Activated CD4-positive, alpha-beta memory T cell treated with anti-CD3 and anti-CD28 coated beads for 36 hours (primary cell): ENCODE measurements at regions of chr1 and their contacts with region 1.

Region 1: DNA sequence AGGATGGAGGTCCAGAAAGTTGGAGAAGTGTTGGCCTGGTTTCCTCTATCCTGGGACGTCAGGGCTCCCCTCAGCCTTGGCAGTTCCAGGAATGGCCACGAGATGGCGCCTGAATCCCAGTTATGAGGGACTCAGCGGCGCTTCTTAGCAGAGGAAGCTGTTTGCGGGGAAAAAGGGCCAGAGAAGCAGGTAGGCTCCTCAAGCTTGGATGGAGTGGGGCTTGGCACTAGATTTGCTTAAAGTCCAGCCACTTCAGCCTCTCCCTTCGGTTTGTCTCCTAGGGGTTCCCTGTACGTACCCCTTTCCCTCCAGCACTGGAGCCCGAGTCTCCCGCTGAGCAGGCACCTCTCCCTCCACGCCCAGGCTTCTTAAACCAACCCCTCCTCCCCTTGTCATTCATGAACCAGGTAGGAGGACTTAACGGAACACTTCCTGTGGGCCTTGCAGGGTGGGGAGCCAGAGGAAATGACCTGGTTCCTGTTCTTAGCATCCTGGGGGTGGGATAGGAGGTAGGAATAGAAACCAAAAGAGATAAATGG is 32.0 kb upstream of the TENT5B start:
- DNase-seq: peak; percentile 93
- H3K4me3 Mint-ChIP-seq: peak overlapping the region; percentile 64
- H3K27ac Mint-ChIP-seq: peak overlapping the region; percentile 42
- H3K4me1 Mint-ChIP-seq: peaks cover 19% of the 10 kb centered on the region
- H3K27me3 Mint-ChIP-seq: no peaks in the 10 kb centered on the region

Region 2: GRCh38 chr1:26889551-26890466 is 154.9 kb before region 1 on chr1 and contains the start of gene GPN2:
- CTCF ChIA-PET with region 1: no interaction called
- POLR2A ChIA-PET with region 1: no interaction called
- intact Hi-C with region 1: no loop called
- DNase-seq: peak; percentile 86
- H3K4me3 Mint-ChIP-seq: peak within 1 kb of the TSS; percentile 90
- H3K27ac Mint-ChIP-seq: peak within 1 kb of the TSS; percentile 85
- H3K4me1 Mint-ChIP-seq: peaks cover 36% of the 10 kb centered on the region
- H3K27me3 Mint-ChIP-seq: no peaks in the 10 kb centered on the region
- total RNA-seq, gene GPN2: 35.4 to 38.3 TPM

Region 3: GRCh38 chr1:26993237-26994019 is 51.3 kb before region 1 on chr1 and contains the start of gene TRNP1:
- CTCF ChIA-PET with region 1: interaction called, 18 read pairs
- POLR2A ChIA-PET with region 1: interaction called, 4 read pairs
- intact Hi-C with region 1: loop called (anchors 10 kb)
- DNase-seq: peak; percentile 75
- H3K4me3 Mint-ChIP-seq: peak within 1 kb of the TSS; percentile 68
- H3K27ac Mint-ChIP-seq: no peak within 1 kb of the TSS
- H3K4me1 Mint-ChIP-seq: peaks cover 20% of the 10 kb centered on the region
- H3K27me3 Mint-ChIP-seq: peaks cover 44% of the 10 kb centered on the region
- total RNA-seq, gene TRNP1: 0.19 to 0.53 TPM

Region 4: DNA sequence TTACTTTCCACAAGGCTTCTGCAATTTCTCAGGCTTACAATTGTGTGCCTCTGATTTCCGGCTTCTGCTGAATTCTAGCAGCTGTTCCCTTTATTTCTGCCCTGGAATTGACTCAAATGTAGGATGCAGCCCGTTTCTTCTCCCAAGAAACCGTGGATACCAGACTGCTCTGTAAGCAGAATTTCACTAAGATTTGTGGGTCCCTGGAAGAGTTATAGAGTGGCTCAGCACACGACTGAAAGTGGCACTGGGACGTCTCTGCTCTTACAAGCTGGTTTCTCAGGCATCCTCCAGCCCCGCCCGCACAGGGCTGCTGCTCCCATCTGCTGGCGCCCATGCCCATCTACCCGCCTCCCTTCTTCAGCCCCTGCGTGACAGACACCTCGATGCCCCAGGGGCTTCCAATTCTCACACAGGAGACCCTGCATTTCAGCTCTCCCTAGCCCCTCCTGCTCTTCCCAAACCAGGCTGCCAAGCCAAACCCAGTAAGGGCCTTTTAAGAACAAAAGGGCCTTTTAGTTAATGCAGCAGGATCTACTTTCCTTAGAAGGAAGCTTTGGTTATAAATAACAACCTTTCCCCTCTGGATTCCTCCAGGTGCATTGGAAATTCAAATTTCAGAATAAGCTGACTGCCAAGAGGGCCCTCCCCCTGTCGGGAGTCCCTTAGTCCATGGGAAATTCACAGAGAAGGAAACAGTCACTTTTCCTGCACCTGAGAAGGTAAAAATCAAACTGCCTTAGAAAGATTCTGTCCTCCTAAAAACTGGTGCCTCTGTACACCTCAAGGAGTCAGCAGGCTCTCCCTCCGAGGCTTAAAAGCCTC is 13.3 kb after region 1 on chr1:
- CTCF ChIA-PET with region 1: interaction called, 74 read pairs
- POLR2A ChIA-PET with region 1: no interaction called
- intact Hi-C with region 1: no loop called
- DNase-seq: no peak
- H3K4me3 Mint-ChIP-seq: no peak overlapping the region
- H3K27ac Mint-ChIP-seq: no peak overlapping the region
- H3K4me1 Mint-ChIP-seq: no peaks in the 10 kb centered on the region
- H3K27me3 Mint-ChIP-seq: no peaks in the 10 kb centered on the region

Region 5: GRCh38 chr1:27087371-27088220 is 42.9 kb after region 1 on chr1:
- CTCF ChIA-PET with region 1: interaction called, 366 read pairs
- POLR2A ChIA-PET with region 1: no interaction called
- intact Hi-C with region 1: no loop called
- DNase-seq: no peak
- H3K4me3 Mint-ChIP-seq: no peak overlapping the region
- H3K27ac Mint-ChIP-seq: no peak overlapping the region
- H3K4me1 Mint-ChIP-seq: no peaks in the 10 kb centered on the region
- H3K27me3 Mint-ChIP-seq: peaks cover 3% of the 10 kb centered on the region

Region 6: DNA sequence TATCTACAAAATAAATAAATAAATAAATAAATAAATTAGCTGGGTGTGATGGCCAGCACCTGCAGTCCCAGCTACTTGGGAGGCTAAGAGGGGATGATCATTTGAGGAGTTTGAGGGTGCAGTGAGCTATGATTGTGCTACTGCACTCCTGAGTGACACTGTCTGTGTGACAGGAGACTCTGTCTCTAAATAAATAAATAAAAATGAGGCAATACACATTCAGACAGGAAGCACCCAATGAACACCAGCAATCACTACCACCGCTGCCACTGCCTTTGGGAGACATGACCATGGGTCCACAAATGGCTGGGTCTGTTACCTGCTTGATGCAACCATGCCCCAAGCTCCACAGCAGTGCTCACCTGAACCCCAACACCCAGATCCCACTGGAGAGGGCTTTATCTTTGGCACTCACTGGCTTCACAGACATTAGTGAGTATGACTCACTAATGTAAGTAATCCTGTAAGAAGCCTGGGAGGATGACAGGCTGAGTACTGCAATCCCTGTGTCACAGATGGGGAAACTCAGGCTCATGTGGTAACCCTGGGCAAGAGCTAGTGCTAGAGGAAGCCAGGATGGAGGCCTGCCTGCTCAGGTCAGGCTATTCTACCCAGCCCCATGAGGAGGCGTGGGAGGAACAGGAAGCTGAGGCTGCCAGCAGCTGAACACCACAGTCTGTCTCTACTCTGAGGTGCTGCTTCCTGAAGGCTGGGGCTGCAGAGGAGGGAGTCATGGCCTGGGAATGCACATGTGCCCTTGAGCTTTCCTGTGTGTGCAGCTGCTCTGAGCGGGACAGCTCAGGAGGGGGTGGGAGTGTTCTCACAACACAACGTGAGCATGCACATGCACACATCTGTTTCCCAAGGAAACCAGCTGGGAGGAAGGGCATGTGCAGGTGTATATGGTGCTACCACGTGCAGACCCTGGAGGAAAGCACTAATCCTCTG is 67.2 kb after region 1 on chr1:
- CTCF ChIA-PET with region 1: interaction called, 17 read pairs
- POLR2A ChIA-PET with region 1: no interaction called
- intact Hi-C with region 1: no loop called
- DNase-seq: peak; percentile 89
- H3K4me3 Mint-ChIP-seq: no peak overlapping the region
- H3K27ac Mint-ChIP-seq: peak overlapping the region; percentile 83
- H3K4me1 Mint-ChIP-seq: peaks cover 40% of the 10 kb centered on the region
- H3K27me3 Mint-ChIP-seq: no peaks in the 10 kb centered on the region

Region 7: GRCh38 chr1:27201295-27201694 is 156.6 kb after region 1 on chr1:
- CTCF ChIA-PET with region 1: interaction called, 13 read pairs
- POLR2A ChIA-PET with region 1: no interaction called
- intact Hi-C with region 1: loop called (anchors 1 kb)
- DNase-seq: no peak
- H3K4me3 Mint-ChIP-seq: no peak overlapping the region
- H3K27ac Mint-ChIP-seq: no peak overlapping the region
- H3K4me1 Mint-ChIP-seq: peaks cover 4% of the 10 kb centered on the region
- H3K27me3 Mint-ChIP-seq: no peaks in the 10 kb centered on the region

Region 8: GRCh38 chr1:27300341-27301051 is 255.8 kb after region 1 on chr1:
- CTCF ChIA-PET with region 1: interaction called, 23 read pairs
- POLR2A ChIA-PET with region 1: no interaction called
- intact Hi-C with region 1: no loop called
- DNase-seq: peak; percentile 83
- H3K4me3 Mint-ChIP-seq: no peak overlapping the region
- H3K27ac Mint-ChIP-seq: no peak overlapping the region
- H3K4me1 Mint-ChIP-seq: no peaks in the 10 kb centered on the region
- H3K27me3 Mint-ChIP-seq: no peaks in the 10 kb centered on the region

Region 9: DNA sequence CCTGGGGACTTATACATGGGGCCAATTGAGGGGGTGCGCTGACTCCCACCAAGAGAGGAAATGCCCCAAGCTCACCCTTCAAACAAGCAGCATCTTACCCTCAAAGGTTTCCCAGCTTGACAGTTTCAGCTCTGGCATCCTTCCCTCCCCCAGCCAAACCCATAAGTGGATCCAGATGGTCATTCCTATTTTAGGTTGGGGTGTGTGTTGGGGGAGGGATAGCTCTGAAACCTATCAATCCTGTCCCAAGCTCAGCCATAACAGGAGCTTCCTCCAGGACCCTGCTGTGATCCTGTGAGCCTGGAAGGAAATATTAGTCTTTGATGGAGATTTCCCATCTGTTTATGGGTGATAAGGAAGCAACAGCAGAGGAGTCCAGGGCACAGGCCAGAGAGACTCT is 273.9 kb after region 1 on chr1:
- CTCF ChIA-PET with region 1: no interaction called
- POLR2A ChIA-PET with region 1: no interaction called
- intact Hi-C with region 1: no loop called
- DNase-seq: no peak
- H3K4me3 Mint-ChIP-seq: no peak overlapping the region
- H3K27ac Mint-ChIP-seq: no peak overlapping the region
- H3K4me1 Mint-ChIP-seq: peaks cover 13% of the 10 kb centered on the region
- H3K27me3 Mint-ChIP-seq: no peaks in the 10 kb centered on the region